Heart left ventricle (tissue), 16 donors: ENCODE measurements at regions of chr3 and their contacts with region 1.

Region 1: GRCh38 chr3:23805633-23806533 is at the start of gene UBE2E1:
- DNase-seq: peak; percentile 81 to 87 (median 86)
- ATAC-seq: peak; percentile 71 to 87 (median 80)
- H3K4me3 ChIP-seq: peak within 1 kb of the TSS; percentile 80 to 100 (median 93)
- H3K27ac ChIP-seq: peak within 1 kb of the TSS; percentile 38 to 95 (median 88)
- H3K4me1 ChIP-seq: peaks cover 0 to 36% (median 28%) of the 10 kb centered on the region in 12 donors
- H3K27me3 ChIP-seq: no peaks in the 10 kb centered on the region
- CTCF ChIP-seq: no peak
- POLR2A ChIP-seq: peak in 1 of 2 donors; percentile 42
- total RNA-seq, gene UBE2E1: 59.1 to 97.1 (median 65.0) TPM

Region 2: DNA sequence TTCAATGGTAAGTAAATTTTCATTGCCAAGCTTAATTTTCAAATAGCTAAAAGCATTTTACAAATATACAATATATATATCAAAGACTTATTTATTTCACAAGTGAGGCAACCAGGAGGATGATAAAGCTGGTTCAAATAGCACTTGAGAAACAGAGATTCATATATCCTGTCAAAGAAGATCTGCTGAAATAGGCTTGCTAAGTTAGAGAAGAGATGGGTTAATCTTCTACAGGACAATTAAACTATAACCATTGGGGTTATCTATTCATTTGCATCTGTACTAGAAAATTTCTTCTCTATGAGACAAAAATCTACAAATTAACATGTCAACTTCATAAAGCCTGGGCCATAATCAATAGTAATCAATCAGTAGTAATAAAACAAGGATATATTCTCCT is 1240.5 kb before region 1 on chr3:
- intact Hi-C with region 1: loop called in 1 of 10 experiments (anchors 10 kb)
- DNase-seq: no peak
- ATAC-seq: no peak
- H3K4me3 ChIP-seq: no peak overlapping the region
- H3K27ac ChIP-seq: no peak overlapping the region
- H3K4me1 ChIP-seq: no peaks in the 10 kb centered on the region
- H3K27me3 ChIP-seq: no peaks in the 10 kb centered on the region
- CTCF ChIP-seq: no peak
- POLR2A ChIP-seq: no peak

Region 3: DNA sequence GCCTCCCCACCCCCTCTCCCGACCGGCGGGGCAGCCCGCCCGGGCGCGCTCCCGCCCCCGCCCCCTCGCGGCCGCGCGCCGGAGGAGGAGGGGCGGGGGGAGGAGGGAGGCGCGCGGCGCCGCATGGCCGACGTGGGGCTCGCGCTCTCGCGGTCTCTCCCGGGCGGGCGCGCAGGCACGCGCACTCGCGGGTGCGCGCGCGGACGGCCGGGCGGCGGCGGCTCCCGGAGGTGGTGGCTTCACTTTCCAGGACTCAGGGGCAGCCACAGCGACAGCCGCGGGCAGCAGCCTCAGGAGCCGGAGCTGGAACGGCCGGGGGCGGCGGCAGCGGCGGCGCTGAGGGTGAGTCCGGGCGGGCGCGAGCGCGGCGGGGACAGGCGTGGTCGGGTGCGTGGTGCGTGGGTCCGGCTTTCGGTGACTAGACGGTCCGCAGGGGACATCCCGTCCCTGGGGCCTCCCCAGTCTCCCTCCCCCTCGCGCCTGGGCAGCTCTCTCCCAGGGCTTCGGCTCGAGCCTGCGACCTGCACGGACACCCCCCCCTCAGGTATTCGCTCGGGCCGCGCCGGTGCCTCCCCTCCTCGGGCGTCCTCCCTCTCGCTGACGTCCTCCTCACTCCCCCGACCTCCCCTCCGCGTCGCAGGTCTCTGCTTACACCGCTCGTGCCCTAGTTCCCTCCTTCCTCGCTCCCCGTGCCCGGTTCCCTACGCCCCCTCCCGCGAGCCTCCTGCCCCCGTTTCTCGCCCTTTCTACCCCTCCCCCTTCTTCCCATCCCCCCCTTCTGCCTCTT is 602.8 kb before region 1 on chr3 and contains the start of gene UBE2E2:
- intact Hi-C with region 1: loop called in 2 of 10 experiments (anchors 5 kb)
- DNase-seq: peak in 4 of 5 donors; percentile 78 to 86 (median 83)
- ATAC-seq: peak; percentile 57 to 93 (median 85)
- H3K4me3 ChIP-seq: peak within 1 kb of the TSS; percentile 77 to 98 (median 90)
- H3K27ac ChIP-seq: peak within 1 kb of the TSS; percentile 37 to 93 (median 87)
- H3K4me1 ChIP-seq: peaks cover 0 to 34% (median 19%) of the 10 kb centered on the region in 12 donors
- H3K27me3 ChIP-seq: no peaks in the 10 kb centered on the region
- CTCF ChIP-seq: no peak
- POLR2A ChIP-seq: peak in 1 of 2 donors; percentile 64
- total RNA-seq, gene UBE2E2: 35.4 to 63.9 (median 56.3) TPM

Region 4: GRCh38 chr3:23712656-23713559 is 93.0 kb before region 1 on chr3:
- intact Hi-C with region 1: loop called in 1 of 10 experiments (anchors 5 kb)
- DNase-seq: peak in 4 of 5 donors; percentile 54 to 61 (median 57)
- ATAC-seq: peak; percentile 60 to 79 (median 77)
- H3K4me3 ChIP-seq: peak overlapping the region in 3 of 12 donors; percentile 17 to 28 (median 27)
- H3K27ac ChIP-seq: peak overlapping the region in 8 of 12 donors; percentile 4 to 75 (median 46)
- H3K4me1 ChIP-seq: peaks cover 0 to 24% (median 0%) of the 10 kb centered on the region in 12 donors
- H3K27me3 ChIP-seq: no peaks in the 10 kb centered on the region
- CTCF ChIP-seq: peak in 9 of 12 donors; percentile 5 to 47 (median 31)
- POLR2A ChIP-seq: no peak

Region 5: DNA sequence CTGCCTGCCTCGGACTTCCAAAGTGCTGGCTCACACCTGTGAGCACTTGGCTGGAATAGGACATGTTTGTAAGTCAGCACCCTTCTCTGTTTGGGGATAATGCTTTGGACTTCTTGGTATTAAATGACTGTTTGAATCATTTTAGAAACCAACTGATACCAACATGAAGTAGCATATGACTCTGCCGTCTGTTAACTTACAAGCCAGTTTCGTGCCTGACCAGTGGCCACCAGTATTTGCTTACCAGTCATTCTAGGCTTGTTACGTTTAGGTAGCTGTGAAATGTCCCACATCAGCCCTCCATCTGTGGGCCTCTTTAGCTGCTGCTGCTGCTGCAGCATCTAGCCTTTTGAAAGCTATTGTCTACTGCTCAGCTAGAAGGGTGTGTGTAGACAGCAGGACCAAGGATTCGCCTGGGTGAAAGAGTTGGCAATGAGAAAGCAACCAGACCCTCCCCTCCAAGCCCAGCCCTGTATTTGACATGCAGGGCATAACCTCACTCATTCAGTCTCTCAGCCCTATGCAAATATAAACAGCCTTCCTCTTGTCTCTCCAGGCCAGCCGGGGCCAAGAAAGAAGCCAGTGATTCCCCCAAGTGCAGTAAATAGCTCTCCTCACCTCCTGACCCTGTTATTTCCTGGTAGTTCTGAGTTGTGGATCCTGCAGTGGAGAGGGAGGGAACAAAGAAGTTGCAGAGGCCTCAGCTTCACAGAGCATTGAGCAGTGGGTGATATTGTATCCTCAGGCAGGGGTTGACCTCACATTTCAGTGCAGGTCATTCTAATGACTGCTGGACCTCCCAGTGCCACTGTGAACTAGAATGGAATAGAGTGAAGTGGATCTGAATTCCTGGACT is 59.9 kb after region 1 on chr3:
- intact Hi-C with region 1: loop called in 1 of 10 experiments (anchors 5 kb)
- DNase-seq: peak in 2 of 5 donors; percentile 30 to 47
- ATAC-seq: peak in 3 of 4 donors; percentile 43 to 45 (median 44)
- H3K4me3 ChIP-seq: no peak overlapping the region
- H3K27ac ChIP-seq: peak overlapping the region in 10 of 12 donors; percentile 12 to 72 (median 50)
- H3K4me1 ChIP-seq: peaks cover 11 to 62% (median 45%) of the 10 kb centered on the region in 12 donors
- H3K27me3 ChIP-seq: no peaks in the 10 kb centered on the region
- CTCF ChIP-seq: no peak
- POLR2A ChIP-seq: no peak